Activated naive CD4-positive, alpha-beta T cell treated with anti-CD3 and anti-CD28 coated beads for 36 hours (primary cell): ENCODE measurements at regions of chr21 and their contacts with region 1.

Region 1: GRCh38 chr21:25801217-25802014 is 66.6 kb downstream of the GABPA start:
- DNase-seq: peak; percentile 95
- H3K4me3 Mint-ChIP-seq: peak overlapping the region; percentile 23
- H3K27ac Mint-ChIP-seq: no peak overlapping the region
- H3K4me1 Mint-ChIP-seq: peaks cover 6% of the 10 kb centered on the region
- H3K27me3 Mint-ChIP-seq: peaks cover 8% of the 10 kb centered on the region

Region 2: DNA sequence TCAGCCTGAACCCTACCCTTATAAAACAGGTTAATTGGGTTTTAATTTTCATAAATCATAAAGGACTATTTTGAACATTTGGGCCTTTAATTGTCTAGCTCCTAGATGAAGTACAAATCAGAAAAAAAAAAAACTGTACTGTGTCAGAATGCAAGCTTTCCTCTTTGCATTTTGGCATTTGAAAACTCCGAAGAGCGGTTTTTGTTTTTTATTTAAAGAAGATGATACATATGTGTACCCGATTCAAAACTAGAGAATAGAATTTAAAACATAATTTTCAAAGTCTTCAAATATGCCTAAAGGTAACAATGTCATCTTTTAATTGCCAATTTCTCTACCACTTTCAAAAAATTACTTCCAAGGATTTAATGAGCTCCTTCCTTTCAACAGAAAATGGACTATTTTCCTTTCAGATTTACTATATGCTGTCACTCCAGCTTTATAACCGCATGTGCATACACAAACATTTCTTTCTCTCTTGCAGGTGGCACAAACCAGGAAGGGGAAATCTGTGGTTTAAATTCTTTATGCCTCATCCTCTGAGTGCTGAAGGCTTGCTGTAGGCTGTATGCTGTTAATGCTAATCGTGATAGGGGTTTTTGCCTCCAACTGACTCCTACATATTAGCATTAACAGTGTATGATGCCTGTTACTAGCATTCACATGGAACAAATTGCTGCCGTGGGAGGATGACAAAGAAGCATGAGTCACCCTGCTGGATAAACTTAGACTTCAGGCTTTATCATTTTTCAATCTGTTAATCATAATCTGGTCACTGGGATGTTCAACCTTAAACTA is 227.8 kb before region 1 on chr21:
- CTCF ChIA-PET with region 1: no interaction called
- intact Hi-C with region 1: no loop called
- DNase-seq: peak; percentile 82
- H3K4me3 Mint-ChIP-seq: peak overlapping the region; percentile 72
- H3K27ac Mint-ChIP-seq: peak overlapping the region; percentile 95
- H3K4me1 Mint-ChIP-seq: peaks cover 73% of the 10 kb centered on the region
- H3K27me3 Mint-ChIP-seq: no peaks in the 10 kb centered on the region

Region 3: DNA sequence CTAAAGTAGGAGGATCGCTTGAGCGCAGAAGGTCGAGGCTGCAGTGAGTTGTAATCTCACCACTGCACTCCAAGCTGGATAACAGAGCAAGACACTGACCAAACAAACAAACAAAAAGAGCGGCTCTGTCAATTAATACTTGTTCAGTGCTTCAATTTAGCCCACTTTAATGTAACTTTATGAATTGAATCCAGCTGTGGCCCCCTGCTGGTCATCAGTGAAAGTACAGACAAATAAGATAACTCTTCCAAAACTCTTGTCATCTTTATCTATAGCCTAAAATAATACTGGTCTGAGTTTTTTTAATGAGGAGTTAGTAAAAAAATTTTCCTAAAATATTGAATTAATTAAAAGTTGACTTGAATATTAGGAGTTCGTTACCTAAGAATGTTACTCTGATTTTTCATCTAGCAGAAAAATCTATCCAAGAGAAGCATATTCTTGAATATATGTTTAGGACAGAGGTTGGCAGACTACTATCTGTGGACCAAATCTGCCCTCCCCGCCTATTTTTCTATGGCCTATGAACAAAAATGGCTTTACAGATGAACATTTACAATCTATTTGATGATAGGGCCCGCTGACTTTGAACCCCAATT is 92.8 kb before region 1 on chr21:
- CTCF ChIA-PET with region 1: interaction called, 3 read pairs
- intact Hi-C with region 1: loop called (anchors 2 kb)
- DNase-seq: peak; percentile 60
- H3K4me3 Mint-ChIP-seq: no peak overlapping the region
- H3K27ac Mint-ChIP-seq: no peak overlapping the region
- H3K4me1 Mint-ChIP-seq: no peaks in the 10 kb centered on the region
- H3K27me3 Mint-ChIP-seq: no peaks in the 10 kb centered on the region

Region 4: GRCh38 chr21:25776440-25776839 is 25.0 kb before region 1 on chr21:
- CTCF ChIA-PET with region 1: interaction called, 10 read pairs
- intact Hi-C with region 1: no loop called
- DNase-seq: no peak
- H3K4me3 Mint-ChIP-seq: no peak overlapping the region
- H3K27ac Mint-ChIP-seq: no peak overlapping the region
- H3K4me1 Mint-ChIP-seq: peaks cover 10% of the 10 kb centered on the region
- H3K27me3 Mint-ChIP-seq: no peaks in the 10 kb centered on the region

Region 5: GRCh38 chr21:25790122-25790877 is 11.1 kb before region 1 on chr21:
- CTCF ChIA-PET with region 1: interaction called, 14 read pairs
- intact Hi-C with region 1: loop called (anchors 1 kb)
- DNase-seq: peak; percentile 43
- H3K4me3 Mint-ChIP-seq: peak overlapping the region; percentile 66
- H3K27ac Mint-ChIP-seq: peak overlapping the region; percentile 22
- H3K4me1 Mint-ChIP-seq: peaks cover 11% of the 10 kb centered on the region
- H3K27me3 Mint-ChIP-seq: peaks cover 4% of the 10 kb centered on the region

Region 6: DNA sequence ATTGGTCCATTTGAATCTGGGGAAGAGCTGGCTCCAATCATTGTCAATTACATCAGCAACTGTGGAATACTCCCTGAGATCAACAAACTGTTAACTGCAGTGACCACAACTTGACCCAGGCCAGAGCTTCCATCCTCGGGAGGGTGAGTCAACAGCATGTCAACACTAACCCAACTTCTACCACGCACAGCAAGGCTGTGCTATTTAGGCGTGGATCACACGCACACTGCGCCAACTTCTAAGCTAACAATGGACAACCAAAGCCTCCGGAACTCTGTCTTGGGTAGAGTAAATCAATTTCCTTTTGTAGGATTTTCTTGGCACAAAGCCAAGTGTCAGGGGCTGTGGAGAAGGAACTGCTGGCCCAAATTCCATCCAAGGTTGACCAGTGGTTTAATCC is 338.8 kb after region 1 on chr21:
- CTCF ChIA-PET with region 1: no interaction called
- intact Hi-C with region 1: no loop called
- DNase-seq: no peak
- H3K4me3 Mint-ChIP-seq: no peak overlapping the region
- H3K27ac Mint-ChIP-seq: no peak overlapping the region
- H3K4me1 Mint-ChIP-seq: peaks cover 10% of the 10 kb centered on the region
- H3K27me3 Mint-ChIP-seq: no peaks in the 10 kb centered on the region